Breast epithelium (tissue), 4 donors: ENCODE measurements at regions of chr11 and their contacts with region 1.

Region 1: DNA sequence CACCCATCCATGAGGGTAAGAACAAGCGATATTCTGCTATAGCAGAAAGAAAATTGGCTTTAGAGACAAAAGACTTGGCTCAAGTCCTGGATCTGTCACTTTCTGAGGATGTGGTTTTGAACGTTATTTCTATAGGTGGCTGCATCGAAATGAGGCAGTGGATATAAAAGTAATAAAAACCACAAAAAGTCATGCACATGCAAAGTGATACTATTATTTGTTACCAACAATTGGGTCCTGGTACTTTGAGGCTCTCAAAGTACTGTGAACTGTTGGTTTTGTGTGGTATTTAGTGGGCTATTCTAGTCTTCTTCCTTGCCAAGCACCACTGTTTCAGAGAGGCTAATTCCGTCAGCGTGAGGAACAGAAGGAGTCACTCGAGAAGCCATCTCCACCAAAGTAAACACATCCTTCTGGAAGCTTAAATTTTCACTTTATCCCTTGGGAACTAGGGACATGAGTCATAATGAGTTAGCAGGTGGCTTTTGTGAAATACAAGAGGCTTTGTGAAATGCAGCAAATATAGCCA is 13.1 kb downstream of the UBASH3B start:
- DNase-seq: no peak
- H3K4me3 ChIP-seq: no peak overlapping the region
- H3K27ac ChIP-seq: no peak overlapping the region
- H3K4me1 ChIP-seq: no peaks in the 10 kb centered on the region
- H3K27me3 ChIP-seq: no peaks in the 10 kb centered on the region
- CTCF ChIP-seq: no peak
- POLR2A ChIP-seq: no peak

Region 2: DNA sequence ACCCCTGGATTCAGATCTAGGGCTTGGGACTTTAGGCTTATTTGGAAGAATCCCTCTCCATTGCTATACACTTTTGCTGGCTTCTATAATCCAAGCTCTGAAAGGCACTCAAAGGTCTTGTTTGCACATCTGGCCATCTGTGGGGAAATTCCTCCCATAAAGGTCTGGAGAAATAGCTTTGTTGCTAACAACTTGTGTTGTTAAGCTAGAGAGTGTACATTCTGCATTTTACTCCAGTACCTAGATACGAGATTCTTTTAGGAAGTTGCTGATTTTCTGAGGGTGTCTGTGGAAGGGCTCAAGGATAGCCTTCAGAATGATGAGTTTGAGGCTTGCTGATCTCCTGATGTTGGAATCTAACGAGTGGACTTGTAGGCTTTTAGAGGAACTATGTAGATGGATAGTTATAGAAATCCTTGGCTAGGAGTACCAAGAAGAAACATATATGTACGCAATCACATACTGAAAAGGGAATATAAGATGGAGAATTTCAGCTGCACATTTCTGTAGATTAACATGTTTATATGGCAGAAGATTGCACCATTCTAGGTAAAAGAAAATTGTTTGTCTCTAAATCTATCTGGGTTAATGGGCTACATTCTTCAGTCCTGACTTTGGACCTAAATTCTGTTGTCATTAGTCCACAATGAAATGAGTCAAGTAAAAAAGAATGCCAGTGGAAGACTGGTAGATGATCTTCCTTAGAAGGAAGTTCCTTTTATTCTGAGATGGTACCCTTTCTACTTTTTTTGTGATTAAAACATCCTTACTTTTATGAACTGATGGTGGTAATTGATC is 37.9 kb after region 1 on chr11:
- intact Hi-C with region 1: no loop called
- DNase-seq: no peak
- H3K4me3 ChIP-seq: no peak overlapping the region
- H3K27ac ChIP-seq: no peak overlapping the region
- H3K4me1 ChIP-seq: no peaks in the 10 kb centered on the region
- H3K27me3 ChIP-seq: no peaks in the 10 kb centered on the region
- CTCF ChIP-seq: no peak
- POLR2A ChIP-seq: no peak

Region 3: GRCh38 chr11:122749005-122749687 is 80.5 kb after region 1 on chr11:
- intact Hi-C with region 1: no loop called
- DNase-seq: no peak
- H3K4me3 ChIP-seq: no peak overlapping the region
- H3K27ac ChIP-seq: no peak overlapping the region
- H3K4me1 ChIP-seq: no peaks in the 10 kb centered on the region
- H3K27me3 ChIP-seq: no peaks in the 10 kb centered on the region
- CTCF ChIP-seq: no peak
- POLR2A ChIP-seq: no peak

Region 4: GRCh38 chr11:122781378-122782195 is 113.0 kb after region 1 on chr11:
- intact Hi-C with region 1: loop called (anchors 5 kb)
- DNase-seq: peak; percentile 83 to 86
- H3K4me3 ChIP-seq: no peak overlapping the region
- H3K27ac ChIP-seq: no peak overlapping the region
- H3K4me1 ChIP-seq: no peaks in the 10 kb centered on the region
- H3K27me3 ChIP-seq: no peaks in the 10 kb centered on the region
- CTCF ChIP-seq: peak; percentile 93 to 96 (median 94)
- POLR2A ChIP-seq: no peak